ENCODE measurements at regions of chr17 and their contacts with region 1.

Region 1: GRCh38 chr17:57995076-57995956 is 7.3 kb upstream of the VEZF1 start:
- DNase-seq: no peak
- ATAC-seq: peak; percentile 91 to 92
- H3K4me3 ChIP-seq: no peak overlapping the region
- H3K27ac ChIP-seq: peak overlapping the region; percentile 42
- H3K4me1 ChIP-seq: peaks cover 39% of the 10 kb centered on the region
- H3K27me3 ChIP-seq: no peaks in the 10 kb centered on the region
- CTCF ChIP-seq: peak; percentile 62

Region 2: GRCh38 chr17:57849874-57850754 is 145.2 kb before region 1 on chr17 and contains the start of gene MRPS23:
- intact Hi-C with region 1: loop called (anchors 10 kb)
- DNase-seq: peak; percentile 100
- ATAC-seq: peak; percentile 94 to 98
- H3K4me3 ChIP-seq: peak within 1 kb of the TSS; percentile 70
- H3K27ac ChIP-seq: peak within 1 kb of the TSS; percentile 92
- H3K4me1 ChIP-seq: peaks cover 50% of the 10 kb centered on the region
- H3K27me3 ChIP-seq: no peaks in the 10 kb centered on the region
- CTCF ChIP-seq: no peak
- total RNA-seq, gene MRPS23: 35.4 TPM

Region 3: GRCh38 chr17:57892146-57892828 is 103.0 kb before region 1 on chr17:
- intact Hi-C with region 1: loop called (anchors 10 kb)
- DNase-seq: peak; percentile 92
- ATAC-seq: peak; percentile 77 to 90
- H3K4me3 ChIP-seq: peak overlapping the region; percentile 39
- H3K27ac ChIP-seq: peak overlapping the region; percentile 95
- H3K4me1 ChIP-seq: peaks cover 68% of the 10 kb centered on the region
- H3K27me3 ChIP-seq: no peaks in the 10 kb centered on the region
- CTCF ChIP-seq: peak; percentile 99

Region 4: GRCh38 chr17:58200017-58200633 is 204.8 kb after region 1 on chr17:
- intact Hi-C with region 1: no loop called
- DNase-seq: peak; percentile 77
- ATAC-seq: peak; percentile 72 to 76
- H3K4me3 ChIP-seq: no peak overlapping the region
- H3K27ac ChIP-seq: no peak overlapping the region
- H3K4me1 ChIP-seq: no peaks in the 10 kb centered on the region
- H3K27me3 ChIP-seq: peaks cover 4% of the 10 kb centered on the region
- CTCF ChIP-seq: peak; percentile 61